CD4-positive, alpha-beta memory T cell (primary cell): ENCODE measurements at regions of chr6 and their contacts with region 1.

Region 1: GRCh38 chr6:12011276-12012076 is 636 bp upstream of the HIVEP1 start:
- DNase-seq: peak; percentile 92 to 99 (median 96)
- H3K4me3 ChIP-seq: no peak overlapping the region
- H3K4me3 Mint-ChIP-seq: peak overlapping the region; percentile 85 to 96 (median 92)
- H3K27ac ChIP-seq: no peak overlapping the region
- H3K27ac Mint-ChIP-seq: peak overlapping the region; percentile 94 to 100 (median 97)
- H3K4me1 ChIP-seq: peaks cover 37% of the 10 kb centered on the region
- H3K4me1 Mint-ChIP-seq: peaks cover 30 to 62% (median 46%) of the 10 kb centered on the region in 4 donors
- H3K27me3 ChIP-seq: no peaks in the 10 kb centered on the region
- H3K27me3 Mint-ChIP-seq: peaks cover 0 to 3% of the 10 kb centered on the region in 2 donors

Region 2: GRCh38 chr6:11093589-11094410 is 917.7 kb before region 1 on chr6 and contains the start of gene SMIM13:
- CTCF ChIA-PET with region 1: no interaction called
- POLR2A ChIA-PET with region 1: no interaction called
- intact Hi-C with region 1: loop called (anchors 1 kb)
- DNase-seq: peak; percentile 92 to 96 (median 92)
- H3K4me3 ChIP-seq: peak within 1 kb of the TSS; percentile 78 to 82
- H3K4me3 Mint-ChIP-seq: peak within 1 kb of the TSS; percentile 97 to 99 (median 98)
- H3K27ac ChIP-seq: peak within 1 kb of the TSS; percentile 93
- H3K27ac Mint-ChIP-seq: peak within 1 kb of the TSS; percentile 92 to 98 (median 98)
- H3K4me1 ChIP-seq: peaks cover 26% of the 10 kb centered on the region
- H3K4me1 Mint-ChIP-seq: peaks cover 26 to 38% (median 32%) of the 10 kb centered on the region in 4 donors
- H3K27me3 ChIP-seq: no peaks in the 10 kb centered on the region
- H3K27me3 Mint-ChIP-seq: no peaks in the 10 kb centered on the region
- total RNA-seq, gene SMIM13: 5.4 to 6.1 TPM

Region 3: DNA sequence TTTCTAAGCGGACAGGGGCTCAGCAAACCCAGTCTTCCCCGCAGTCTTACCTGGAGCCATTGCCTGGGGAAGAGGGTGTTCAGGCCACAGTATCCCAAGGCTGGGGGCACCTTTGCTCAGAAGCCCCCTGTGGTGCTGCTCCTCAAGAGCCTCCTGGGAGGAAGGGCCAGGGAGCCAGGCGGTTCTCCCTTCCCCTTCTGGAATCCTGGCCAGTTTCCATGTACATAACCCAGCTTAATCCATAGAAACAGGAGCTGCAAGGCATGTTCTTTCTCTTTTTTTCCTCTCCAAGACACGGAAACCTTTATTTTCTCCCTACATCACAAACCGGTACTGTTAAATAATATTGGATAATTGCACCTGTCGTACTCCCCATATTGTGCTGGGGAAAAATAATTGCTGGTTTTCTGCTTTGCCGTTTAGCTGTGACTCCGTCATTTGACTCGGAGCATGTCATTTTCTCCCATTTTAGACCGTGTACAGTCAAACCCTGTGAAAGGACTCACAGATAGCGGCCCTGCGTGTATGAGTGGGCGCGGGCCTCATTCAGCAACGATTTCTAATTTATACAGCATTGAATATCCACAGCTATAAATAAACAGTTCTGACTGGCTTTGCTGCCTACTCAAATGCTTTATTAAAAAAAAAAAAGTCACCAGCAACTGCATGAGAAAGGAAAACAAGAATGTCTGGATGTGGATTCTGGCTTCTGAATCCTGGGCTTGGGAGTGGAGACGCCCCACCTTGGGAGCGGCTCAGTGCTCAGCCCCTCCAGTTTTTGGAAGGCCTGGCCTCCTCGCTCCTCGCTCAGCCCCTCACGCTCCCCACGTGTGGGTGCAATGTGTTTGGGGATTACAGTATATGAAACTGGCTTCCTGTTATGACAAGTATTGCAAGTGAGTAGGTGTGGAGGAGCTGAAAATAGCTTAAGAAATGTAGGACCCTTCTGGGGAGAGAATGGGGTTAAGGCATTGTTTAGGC is 300.2 kb before region 1 on chr6:
- CTCF ChIA-PET with region 1: interaction called, 4 read pairs
- POLR2A ChIA-PET with region 1: interaction called, 45 read pairs
- intact Hi-C with region 1: loop called (anchors 2 kb)
- DNase-seq: peak in 1 of 5 donors; percentile 27
- H3K4me3 ChIP-seq: no peak overlapping the region
- H3K4me3 Mint-ChIP-seq: peak overlapping the region in 7 of 8 donors; percentile 14 to 85 (median 68)
- H3K27ac ChIP-seq: peak overlapping the region; percentile 39
- H3K27ac Mint-ChIP-seq: peak overlapping the region; percentile 89 to 98 (median 95)
- H3K4me1 ChIP-seq: peaks cover 65% of the 10 kb centered on the region
- H3K4me1 Mint-ChIP-seq: peaks cover 52 to 71% (median 63%) of the 10 kb centered on the region in 4 donors
- H3K27me3 ChIP-seq: no peaks in the 10 kb centered on the region
- H3K27me3 Mint-ChIP-seq: no peaks in the 10 kb centered on the region

Region 4: GRCh38 chr6:11900662-11901598 is 110.5 kb before region 1 on chr6:
- CTCF ChIA-PET with region 1: no interaction called
- POLR2A ChIA-PET with region 1: no interaction called
- intact Hi-C with region 1: loop called (anchors 5 kb)
- DNase-seq: peak; percentile 2 to 33 (median 7)
- H3K4me3 ChIP-seq: peak overlapping the region in 1 of 2 donors; percentile 18
- H3K4me3 Mint-ChIP-seq: peak overlapping the region in 7 of 8 donors; percentile 19 to 69 (median 51)
- H3K27ac ChIP-seq: no peak overlapping the region
- H3K27ac Mint-ChIP-seq: peak overlapping the region in 1 of 7 donors; percentile 71
- H3K4me1 ChIP-seq: no peaks in the 10 kb centered on the region
- H3K4me1 Mint-ChIP-seq: peaks cover 7 to 19% (median 10%) of the 10 kb centered on the region in 4 donors
- H3K27me3 ChIP-seq: no peaks in the 10 kb centered on the region
- H3K27me3 Mint-ChIP-seq: peaks cover 2 to 6% of the 10 kb centered on the region in 2 donors

Region 5: GRCh38 chr6:12060780-12061619 is 49.5 kb after region 1 on chr6:
- CTCF ChIA-PET with region 1: interaction called, 4 read pairs
- POLR2A ChIA-PET with region 1: interaction called, 7 read pairs
- intact Hi-C with region 1: loop called (anchors 2 kb)
- DNase-seq: peak; percentile 81 to 97 (median 87)
- H3K4me3 ChIP-seq: peak overlapping the region in 1 of 2 donors; percentile 40
- H3K4me3 Mint-ChIP-seq: peak overlapping the region; percentile 77 to 92 (median 88)
- H3K27ac ChIP-seq: peak overlapping the region; percentile 19
- H3K27ac Mint-ChIP-seq: peak overlapping the region; percentile 77 to 96 (median 91)
- H3K4me1 ChIP-seq: peaks cover 43% of the 10 kb centered on the region
- H3K4me1 Mint-ChIP-seq: peaks cover 39 to 65% (median 44%) of the 10 kb centered on the region in 4 donors
- H3K27me3 ChIP-seq: no peaks in the 10 kb centered on the region
- H3K27me3 Mint-ChIP-seq: no peaks in the 10 kb centered on the region